Mucosa of descending colon (tissue), 3 donors: ENCODE measurements at regions of chr7 and their contacts with region 1.

Region 1: GRCh38 chr7:18345641-18346234 is 149.8 kb upstream of the HDAC9 start:
- DNase-seq: peak in 1 of 3 donors; percentile 68
- ATAC-seq: peak; percentile 56
- H3K4me3 ChIP-seq: no peak overlapping the region
- H3K4me1 ChIP-seq: no peaks in the 10 kb centered on the region
- CTCF ChIP-seq: peak; percentile 47

Region 2: DNA sequence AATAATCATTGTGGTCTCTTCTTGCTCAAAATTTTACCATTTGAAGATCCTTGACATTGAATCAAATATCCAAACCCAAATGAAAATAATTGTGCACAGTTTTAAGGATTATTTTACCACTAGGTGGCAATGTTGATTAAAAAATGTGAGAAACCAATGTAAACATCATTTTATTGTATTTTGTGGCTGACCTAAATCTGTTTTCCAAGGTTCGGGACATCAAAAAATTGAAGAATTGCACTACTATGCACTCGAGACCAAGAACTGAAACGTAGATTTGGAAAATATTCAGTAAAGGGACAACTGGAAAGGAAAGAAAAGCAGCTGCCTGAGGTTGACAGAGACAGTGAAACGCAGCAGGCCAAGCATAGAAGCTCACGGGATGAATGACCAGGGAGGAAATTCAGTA is 664.8 kb before region 1 on chr7:
- intact Hi-C with region 1: loop called in 1 of 2 experiments (anchors 10 kb)
- DNase-seq: no peak
- ATAC-seq: no peak
- H3K4me3 ChIP-seq: no peak overlapping the region
- H3K4me1 ChIP-seq: no peaks in the 10 kb centered on the region
- CTCF ChIP-seq: no peak

Region 3: DNA sequence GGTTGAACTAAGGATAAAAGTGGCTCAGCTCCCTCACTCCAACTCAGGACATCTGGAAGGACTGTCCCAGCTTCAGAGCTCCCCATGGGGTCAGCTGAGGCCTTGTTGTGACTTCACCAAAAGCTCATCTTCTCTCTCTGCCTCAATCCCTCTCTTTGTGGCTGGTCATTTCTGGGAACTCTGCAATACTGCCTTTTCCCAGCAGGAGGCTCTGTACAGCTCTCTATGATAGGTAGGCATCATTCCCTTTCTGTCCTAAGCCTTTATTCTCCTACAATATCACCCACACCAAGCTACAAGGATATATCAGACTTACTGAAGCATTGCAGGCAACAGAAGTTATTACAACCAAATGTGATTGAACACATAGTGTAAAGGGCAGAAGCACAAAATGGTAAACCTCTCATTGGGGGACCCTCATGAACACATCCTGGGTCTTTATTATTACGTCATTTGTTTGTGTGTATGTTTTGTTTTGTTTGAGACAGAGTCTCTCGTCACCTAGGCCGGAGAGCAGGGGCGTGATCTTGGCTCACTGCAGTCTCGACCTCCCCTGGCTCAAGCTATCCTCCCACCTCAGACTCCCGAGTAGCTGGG is 281.4 kb before region 1 on chr7:
- intact Hi-C with region 1: loop called in 1 of 2 experiments (anchors 10 kb)
- DNase-seq: peak in 1 of 3 donors; percentile 69
- ATAC-seq: peak; percentile 73
- H3K4me3 ChIP-seq: no peak overlapping the region
- H3K4me1 ChIP-seq: no peaks in the 10 kb centered on the region
- CTCF ChIP-seq: peak; percentile 34

Region 4: DNA sequence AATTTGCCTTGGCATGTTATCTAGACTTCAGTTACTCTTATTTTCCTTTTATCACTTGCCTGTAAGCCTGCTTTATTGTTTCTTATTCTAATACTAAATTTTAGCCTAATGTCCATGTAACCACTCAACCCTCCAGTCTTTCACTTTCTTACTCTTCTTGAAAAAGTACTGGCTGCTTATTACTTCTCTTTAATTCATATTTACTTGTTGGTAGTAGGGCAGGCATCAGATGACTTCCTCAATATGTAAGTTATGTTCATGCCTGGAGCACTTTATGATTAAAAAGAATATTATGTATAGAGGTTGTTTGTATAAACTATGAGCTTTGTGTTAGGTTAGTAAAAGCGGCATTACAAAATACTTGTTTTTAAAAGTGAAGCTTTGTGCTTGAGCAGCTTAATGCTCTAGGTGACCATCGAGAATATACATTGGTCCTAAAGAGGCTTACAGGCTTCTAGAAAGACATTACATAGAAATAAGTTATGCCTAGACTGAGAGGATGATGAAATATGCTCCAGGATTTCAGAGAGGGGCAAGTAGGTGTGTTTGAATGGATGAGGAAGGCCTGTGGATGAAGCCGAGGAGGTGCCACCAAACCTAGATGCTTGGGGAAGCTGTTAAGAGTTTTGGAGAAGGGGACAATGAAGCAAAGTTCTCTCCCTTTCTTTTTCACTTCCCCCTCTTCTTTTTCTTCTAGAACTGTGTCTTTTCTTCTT is 57.3 kb before region 1 on chr7:
- intact Hi-C with region 1: no loop called
- DNase-seq: no peak
- ATAC-seq: no peak
- H3K4me3 ChIP-seq: no peak overlapping the region
- H3K4me1 ChIP-seq: no peaks in the 10 kb centered on the region
- CTCF ChIP-seq: no peak

Region 5: DNA sequence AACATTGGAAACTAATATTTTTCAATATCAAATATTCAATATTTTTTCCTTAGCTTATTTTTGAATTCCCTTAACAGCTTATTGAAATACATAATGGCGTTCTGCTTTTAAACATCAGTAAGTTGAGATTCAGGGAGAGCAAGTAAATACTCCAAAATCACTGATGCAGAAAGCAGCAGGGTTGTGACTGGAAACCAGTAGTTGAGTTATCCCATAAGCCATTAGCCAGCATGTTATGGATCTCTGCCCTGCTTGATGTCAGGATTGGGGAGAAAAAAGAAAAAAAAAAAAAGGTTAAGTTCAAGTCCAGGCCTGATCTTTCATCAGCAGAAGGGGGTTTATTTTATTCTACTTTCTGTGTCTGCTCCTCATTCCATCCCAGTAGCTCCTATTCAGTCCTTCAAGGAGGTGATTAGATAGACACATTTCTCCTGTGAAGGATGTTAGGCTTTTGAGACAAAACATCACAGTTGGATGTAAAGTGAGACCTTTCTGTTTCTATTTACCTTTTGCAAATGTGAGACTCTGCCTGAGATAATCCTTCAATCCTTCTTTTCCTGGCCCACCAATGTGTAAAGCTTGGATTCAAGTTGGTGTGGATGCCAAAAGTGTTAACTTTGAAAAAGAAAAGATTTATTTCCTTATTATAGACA is 38.9 kb after region 1 on chr7:
- intact Hi-C with region 1: no loop called
- DNase-seq: no peak
- ATAC-seq: no peak
- H3K4me3 ChIP-seq: no peak overlapping the region
- H3K4me1 ChIP-seq: no peaks in the 10 kb centered on the region
- CTCF ChIP-seq: no peak